ENCODE measurements at regions of chr10 and their contacts with region 1.

Region 1: DNA sequence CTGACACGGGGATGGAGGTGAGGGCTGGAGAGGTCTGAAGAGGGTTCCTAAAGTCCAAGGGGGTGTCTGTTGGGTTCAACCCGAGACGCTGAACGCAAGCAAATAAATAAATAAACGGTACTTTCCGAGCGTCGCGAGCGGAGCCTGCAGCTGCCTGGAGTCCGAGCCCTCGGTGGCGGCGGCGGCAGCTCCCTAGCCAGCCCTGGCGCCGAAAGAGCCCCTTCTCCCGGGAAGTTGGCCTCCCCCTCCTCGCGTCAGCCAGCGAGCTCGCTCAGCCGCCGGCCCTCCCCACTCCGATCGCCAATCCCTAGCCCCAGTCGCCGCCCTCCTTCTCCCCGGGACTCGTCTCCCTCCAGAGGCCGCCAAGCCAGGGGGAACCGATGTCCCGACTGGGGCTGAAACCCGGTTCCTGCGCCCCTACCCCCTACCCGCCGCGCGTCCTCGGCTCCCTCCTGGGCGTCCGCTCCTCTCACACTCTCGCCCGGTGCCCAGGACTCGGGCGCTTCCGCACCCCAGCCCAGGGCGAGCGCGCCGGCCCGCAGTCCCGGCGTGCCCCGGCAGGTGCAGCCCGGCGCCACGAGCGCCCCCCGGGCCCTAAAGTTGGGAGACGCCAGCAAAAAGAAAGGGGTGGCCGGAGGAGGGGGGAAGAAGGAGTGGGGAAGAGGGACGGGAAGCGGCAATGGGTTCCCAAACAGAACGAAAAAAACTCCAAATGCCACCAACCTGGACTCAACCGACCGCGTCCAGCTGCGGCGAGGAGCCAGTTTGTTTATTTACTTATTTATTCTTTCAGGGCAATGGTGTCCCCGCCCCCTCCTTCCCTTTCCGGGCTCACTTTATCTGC is at the start of gene GFRA1:
- DNase-seq: no peak
- H3K4me3 ChIP-seq: peak within 1 kb of the TSS; percentile 57 to 59
- H3K27ac ChIP-seq: peak within 1 kb of the TSS; percentile 76
- H3K4me1 ChIP-seq: peaks cover 24% of the 10 kb centered on the region
- H3K27me3 ChIP-seq: no peaks in the 10 kb centered on the region
- CTCF ChIP-seq: no peak
- POLR2A ChIP-seq: no peak
- total RNA-seq, gene GFRA1: 57.7 TPM

Region 2: DNA sequence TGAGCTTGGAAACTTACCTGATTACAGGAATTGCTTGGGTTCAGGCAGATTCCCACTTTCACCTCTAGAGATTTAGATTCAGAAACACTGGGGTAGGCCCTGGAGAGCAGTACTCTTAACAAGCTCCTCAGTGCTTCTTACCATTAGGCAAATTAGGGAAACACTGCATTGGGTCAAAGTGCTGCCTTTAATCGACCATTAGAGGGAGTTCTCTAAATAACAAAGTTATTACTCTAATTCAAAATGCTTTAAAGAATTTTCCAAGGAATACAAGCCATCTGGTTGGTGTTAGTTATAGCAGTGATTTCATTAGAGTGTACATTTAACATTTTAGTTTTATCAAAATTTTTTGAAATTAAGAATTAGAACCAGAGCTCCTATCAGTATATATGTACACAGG is 324.2 kb before region 1 on chr10:
- intact Hi-C with region 1: loop called (anchors 10 kb)
- DNase-seq: no peak
- H3K4me3 ChIP-seq: no peak overlapping the region
- H3K27ac ChIP-seq: no peak overlapping the region
- H3K4me1 ChIP-seq: no peaks in the 10 kb centered on the region
- H3K27me3 ChIP-seq: no peaks in the 10 kb centered on the region
- CTCF ChIP-seq: no peak
- POLR2A ChIP-seq: no peak

Region 3: DNA sequence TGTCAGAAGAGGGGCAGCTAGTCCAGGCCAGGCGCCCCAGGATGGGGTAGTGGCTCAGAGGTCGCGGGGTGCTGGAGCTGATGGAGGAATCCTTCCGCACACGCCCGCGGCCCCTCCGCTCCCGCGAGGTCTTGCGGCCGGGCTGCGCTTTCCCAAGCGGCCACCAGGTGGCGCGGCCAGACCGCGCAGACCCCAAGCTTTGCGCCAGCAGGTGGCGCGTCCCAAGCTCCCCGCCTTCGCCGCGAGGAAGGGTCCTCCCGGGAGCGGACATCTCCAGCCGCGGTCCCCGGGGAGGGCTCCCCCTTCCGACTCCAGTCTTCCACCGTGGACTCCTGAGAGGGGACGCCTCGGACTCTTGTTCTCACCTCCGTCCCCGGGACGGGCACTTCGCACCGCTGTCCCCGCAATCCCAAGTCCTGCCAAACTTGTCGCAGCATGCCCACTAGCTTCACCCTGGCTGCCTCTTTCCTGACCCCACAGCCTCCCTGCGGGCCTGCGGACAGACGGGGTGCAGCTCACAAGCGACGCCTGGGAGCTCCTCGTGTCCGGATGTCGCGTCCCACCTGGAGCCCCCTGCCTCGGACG is 944.0 kb after region 1 on chr10:
- intact Hi-C with region 1: no loop called
- DNase-seq: no peak
- H3K4me3 ChIP-seq: peak overlapping the region; percentile 25 to 38
- H3K27ac ChIP-seq: no peak overlapping the region
- H3K4me1 ChIP-seq: peaks cover 15% of the 10 kb centered on the region
- H3K27me3 ChIP-seq: no peaks in the 10 kb centered on the region
- CTCF ChIP-seq: peak; percentile 99 to 100 (median 99)
- POLR2A ChIP-seq: no peak

Measured in vagina (tissue), 2 donors.